ENCODE measurements at regions of chr10 and their contacts with region 1.

Region 1: DNA sequence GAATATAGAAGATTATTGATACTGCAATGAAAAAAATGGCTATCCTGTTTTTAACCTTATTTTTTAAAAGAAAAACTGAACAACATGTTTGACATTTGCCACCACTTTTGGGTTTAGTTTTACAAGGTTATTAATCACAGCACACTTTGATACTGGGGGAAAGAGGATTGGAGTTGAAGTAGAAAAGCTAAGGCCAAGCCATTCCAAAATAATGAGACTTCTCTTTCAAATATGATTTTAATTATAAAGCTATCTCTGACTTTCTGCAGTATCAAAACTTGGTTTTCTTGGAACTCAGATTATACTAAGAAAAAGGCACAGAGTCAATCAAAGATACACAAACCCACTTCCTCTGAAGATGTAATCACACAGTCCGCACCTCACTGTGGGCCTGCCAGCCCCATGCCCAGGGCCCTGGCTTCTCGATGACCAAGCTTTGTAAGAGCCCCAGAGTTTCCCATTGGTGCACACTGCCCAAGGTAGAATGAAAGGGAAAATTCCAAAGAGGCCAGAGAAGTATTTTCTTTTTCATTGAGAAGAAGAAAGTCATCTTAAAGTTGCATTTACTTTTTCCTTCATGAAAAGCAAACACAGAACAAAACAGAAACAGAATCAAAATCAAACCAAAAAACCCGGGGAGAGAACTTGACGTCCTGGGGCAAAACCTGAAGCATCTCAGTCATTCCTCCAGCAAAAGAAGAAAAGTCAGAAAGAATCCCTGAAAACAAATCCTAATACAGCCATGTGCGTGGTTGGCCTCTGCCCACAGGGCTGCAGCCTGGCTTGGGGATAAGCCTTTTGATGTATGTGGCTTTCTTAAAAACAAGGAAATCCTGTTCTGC is 187.7 kb upstream of the KLF6 start:
- DNase-seq: peak; percentile 87
- H3K4me3 Mint-ChIP-seq: peak overlapping the region; percentile 88
- H3K27ac Mint-ChIP-seq: peak overlapping the region; percentile 99
- H3K4me1 Mint-ChIP-seq: peaks cover 41% of the 10 kb centered on the region
- H3K27me3 Mint-ChIP-seq: no peaks in the 10 kb centered on the region

Region 2: DNA sequence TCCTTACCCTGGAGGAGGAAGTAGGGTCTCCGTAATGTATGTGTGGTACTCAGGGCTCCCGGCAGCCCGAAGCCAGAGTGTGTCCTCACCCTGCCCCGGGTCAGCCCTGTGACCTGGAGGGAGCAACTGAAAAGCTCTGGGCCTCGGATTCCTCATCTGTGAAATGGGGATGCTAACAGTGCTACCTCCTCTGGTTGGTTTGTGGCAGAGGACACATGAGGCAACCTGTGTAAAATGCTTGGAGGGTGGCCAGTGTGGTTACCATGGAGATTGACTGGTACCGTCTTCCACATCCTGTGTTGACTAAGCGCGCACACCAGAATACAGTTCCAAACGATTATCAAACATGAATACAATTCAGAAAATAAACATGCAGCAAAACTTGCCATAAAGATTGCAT is 23.8 kb before region 1 on chr10:
- intact Hi-C with region 1: loop called (anchors 2 kb)
- DNase-seq: peak; percentile 92
- H3K4me3 Mint-ChIP-seq: peak overlapping the region; percentile 50
- H3K27ac Mint-ChIP-seq: peak overlapping the region; percentile 90
- H3K4me1 Mint-ChIP-seq: peaks cover 49% of the 10 kb centered on the region
- H3K27me3 Mint-ChIP-seq: no peaks in the 10 kb centered on the region

Region 3: DNA sequence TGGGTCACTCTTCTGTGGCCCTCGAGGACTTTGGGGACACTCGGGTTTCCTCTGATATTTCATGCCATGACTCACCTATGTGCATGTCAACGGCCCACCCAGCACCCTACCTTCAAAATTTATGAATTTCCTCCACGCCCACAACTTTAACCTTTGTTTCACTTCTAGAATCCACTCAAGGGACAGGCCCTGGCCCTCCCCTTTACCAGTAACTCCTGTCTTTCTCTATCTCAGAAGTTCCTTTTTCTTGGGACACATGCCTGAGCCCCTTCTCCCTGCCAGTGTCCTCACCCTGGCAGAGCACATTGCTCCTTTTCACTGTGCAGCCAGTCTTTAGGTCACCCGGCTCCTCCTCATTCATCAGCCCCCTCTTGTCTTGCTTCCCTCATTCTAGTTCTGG is 94.8 kb after region 1 on chr10:
- intact Hi-C with region 1: loop called (anchors 5 kb)
- DNase-seq: peak; percentile 69
- H3K4me3 Mint-ChIP-seq: no peak overlapping the region
- H3K27ac Mint-ChIP-seq: no peak overlapping the region
- H3K4me1 Mint-ChIP-seq: peaks cover 15% of the 10 kb centered on the region
- H3K27me3 Mint-ChIP-seq: no peaks in the 10 kb centered on the region

Measured in activated CD4-positive, alpha-beta T cell treated with anti-CD3 and anti-CD28 coated beads, Interleukin-2, amount 10 ng/mL, durations not matched to agents 24 days and 14 days (primary cell).